ENCODE measurements at regions of chr9 and their contacts with region 1.

Region 1: DNA sequence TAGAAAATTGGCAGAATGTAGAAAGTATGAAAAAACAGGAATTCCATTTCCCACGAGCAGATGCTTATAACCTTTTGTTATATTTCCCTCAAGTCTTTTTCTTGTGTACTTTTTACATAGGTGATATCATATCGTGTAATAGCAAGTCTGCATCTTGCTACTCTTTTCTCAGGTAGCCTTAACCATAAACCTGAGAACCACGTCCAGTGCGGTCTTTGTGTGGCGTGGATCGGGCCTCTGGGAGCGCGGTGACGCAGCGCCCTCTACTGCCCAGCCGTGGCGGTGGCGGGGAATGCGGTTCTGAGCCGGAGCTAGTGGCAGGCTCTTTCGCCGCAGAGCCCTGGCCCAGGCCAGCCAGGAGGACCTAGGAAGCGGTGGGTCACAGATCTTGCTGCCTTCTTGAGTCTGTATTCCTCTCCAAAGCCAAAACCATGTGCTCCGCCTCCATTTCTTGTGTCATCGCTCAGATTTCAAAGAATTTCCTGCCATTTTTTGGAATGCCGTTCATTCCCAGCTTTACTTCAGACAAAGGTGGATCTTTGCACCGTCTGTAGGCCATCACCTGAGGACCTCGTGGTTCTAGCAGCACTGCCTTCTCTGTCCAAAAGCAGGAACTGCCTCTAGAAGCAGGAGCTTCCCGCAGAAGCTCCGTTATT is 71.9 kb downstream of the MVB12B start:
- DNase-seq: peak; percentile 49 to 83
- ATAC-seq: peak; percentile 90

Region 2: DNA sequence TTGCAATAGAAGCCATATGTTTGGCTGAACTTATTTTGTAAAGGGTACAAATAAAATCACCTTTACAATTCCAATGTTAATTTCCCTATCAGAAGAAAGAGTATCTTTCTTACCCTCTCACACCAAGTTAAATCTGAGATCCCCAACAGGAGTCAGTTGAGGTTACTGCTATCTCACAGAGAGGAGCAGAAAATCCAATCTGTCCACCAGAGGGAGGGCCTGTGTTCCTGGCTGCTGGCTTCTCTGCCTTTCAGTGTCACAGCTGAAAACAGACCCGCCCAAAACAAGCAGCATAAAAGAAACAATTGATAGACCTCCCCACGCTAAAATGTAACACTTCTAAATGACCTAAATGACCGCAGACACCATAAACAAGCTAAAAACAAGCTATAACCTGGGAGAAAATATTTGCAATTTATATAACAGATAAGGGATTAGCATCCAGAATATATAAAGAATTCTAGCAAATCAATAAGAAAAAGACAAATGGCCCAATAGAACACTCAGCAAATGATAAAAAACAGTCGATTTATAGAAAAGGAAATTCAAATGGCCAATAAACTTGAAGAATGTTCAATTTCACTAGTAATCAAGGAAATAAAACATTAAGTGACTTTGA is 96.4 kb before region 1 on chr9:
- intact Hi-C with region 1: loop called in 1 of 2 experiments (anchors 5 kb)
- DNase-seq: peak in 1 of 2 donors; percentile 59
- ATAC-seq: peak; percentile 57

Region 3: GRCh38 chr9:126347911-126348760 is 50.4 kb before region 1 on chr9:
- intact Hi-C with region 1: no loop called
- DNase-seq: peak; percentile 68 to 75
- ATAC-seq: peak; percentile 67